ENCODE measurements at regions of chr17 and their contacts with region 1.

Region 1: DNA sequence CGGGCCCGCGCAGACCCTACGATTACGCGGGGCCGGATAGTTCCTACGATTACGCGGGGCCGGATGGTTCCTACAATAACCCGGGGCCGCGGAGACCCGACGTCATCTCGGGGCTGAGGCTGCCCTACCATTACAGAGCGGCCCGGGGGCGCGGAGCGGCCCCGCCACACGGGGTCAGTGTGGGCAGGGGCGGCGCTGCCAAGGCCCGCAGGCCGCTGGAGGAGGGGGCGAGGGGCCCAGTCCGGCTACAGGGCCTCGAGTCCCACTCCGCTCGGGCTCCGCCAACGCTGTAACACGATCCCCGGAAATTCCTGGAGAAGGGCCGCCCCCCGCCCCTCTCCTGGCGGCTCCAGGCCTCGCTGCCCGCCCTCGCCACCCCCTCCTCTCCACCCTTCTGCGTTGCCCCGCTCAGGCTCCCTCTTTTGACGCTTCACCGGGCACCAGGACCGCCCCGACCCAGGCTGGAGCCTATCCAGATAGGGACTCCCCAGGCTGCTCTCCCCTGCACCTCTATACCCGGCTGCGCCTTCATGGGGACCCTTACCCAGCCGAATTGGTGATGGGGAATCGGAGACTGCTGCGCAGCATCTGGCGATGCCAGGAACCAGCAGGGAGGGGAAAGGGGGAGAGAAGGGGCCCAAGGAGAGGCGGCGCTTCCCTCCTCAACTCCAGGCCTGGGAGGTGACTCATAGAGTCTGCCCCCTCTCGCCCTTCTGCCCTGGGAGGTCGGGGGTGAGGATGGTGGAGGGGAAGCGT is at the start of gene RAB34:
- DNase-seq: peak; percentile 74 to 93
- H3K4me3 ChIP-seq: peak within 1 kb of the TSS; percentile 87
- H3K27ac ChIP-seq: peak within 1 kb of the TSS; percentile 82
- H3K4me1 ChIP-seq: peaks cover 35% of the 10 kb centered on the region
- H3K27me3 ChIP-seq: no peaks in the 10 kb centered on the region
- CTCF ChIP-seq: no peak; the same call in 1 of the 2 replicates
- total RNA-seq, gene RAB34: 161 and 174 TPM in 2 replicates

Region 2: DNA sequence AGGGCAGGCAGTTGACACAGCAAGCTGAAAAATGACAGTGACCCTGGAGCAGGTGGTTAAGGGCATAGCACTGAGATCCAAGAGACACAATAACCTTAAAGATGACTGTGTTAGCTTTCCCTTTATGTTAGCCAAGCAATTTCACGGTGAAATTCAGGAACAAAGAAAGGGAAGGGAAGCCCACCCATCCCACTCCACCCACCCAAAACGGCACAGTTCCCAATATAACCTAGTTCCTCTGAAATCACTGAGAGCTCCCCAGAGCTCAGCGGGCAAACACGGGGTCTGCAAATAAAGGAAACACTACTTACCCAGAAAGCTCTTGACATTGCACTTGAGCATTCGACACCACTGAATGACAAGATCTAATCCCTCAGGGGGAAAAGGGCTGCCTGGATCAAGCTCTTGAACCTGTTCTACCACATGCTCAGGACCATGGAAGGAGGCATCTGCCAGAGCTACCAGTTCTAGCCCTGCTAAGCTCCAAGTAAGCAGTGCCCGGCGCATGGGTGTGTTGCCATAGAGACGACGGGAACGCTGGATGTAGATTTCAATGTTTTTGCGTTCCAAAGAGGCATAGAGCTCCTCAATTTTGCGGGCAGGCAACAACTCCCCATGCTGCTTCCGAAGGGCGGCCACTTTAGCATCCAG is 83.4 kb before region 1 on chr17:
- CTCF ChIA-PET with region 1: no interaction called
- POLR2A ChIA-PET with region 1: no interaction called
- intact Hi-C with region 1: no loop called
- DNase-seq: no peak
- H3K4me3 ChIP-seq: no peak overlapping the region
- H3K27ac ChIP-seq: no peak overlapping the region
- H3K4me1 ChIP-seq: no peaks in the 10 kb centered on the region
- H3K27me3 ChIP-seq: no peaks in the 10 kb centered on the region
- CTCF ChIP-seq: no peak

Region 3: GRCh38 chr17:28902819-28903545 is 185.2 kb after region 1 on chr17 and contains the start of gene DHRS13:
- CTCF ChIA-PET with region 1: no interaction called
- POLR2A ChIA-PET with region 1: interaction called, 3 read pairs
- intact Hi-C with region 1: loop called (anchors 5 kb)
- DNase-seq: peak; percentile 85 to 94
- H3K4me3 ChIP-seq: peak within 1 kb of the TSS; percentile 73
- H3K27ac ChIP-seq: no peak within 1 kb of the TSS
- H3K4me1 ChIP-seq: peaks cover 15% of the 10 kb centered on the region
- H3K27me3 ChIP-seq: no peaks in the 10 kb centered on the region
- CTCF ChIP-seq: peak; percentile 88
- total RNA-seq, gene DHRS13: 15.8 and 17.5 TPM in 2 replicates

Region 4: GRCh38 chr17:29076722-29077121 is 359.0 kb after region 1 on chr17:
- CTCF ChIA-PET with region 1: no interaction called
- POLR2A ChIA-PET with region 1: interaction called, 15 read pairs
- intact Hi-C with region 1: no loop called
- DNase-seq: no peak
- H3K4me3 ChIP-seq: no peak overlapping the region
- H3K27ac ChIP-seq: no peak overlapping the region
- H3K4me1 ChIP-seq: no peaks in the 10 kb centered on the region
- H3K27me3 ChIP-seq: no peaks in the 10 kb centered on the region
- CTCF ChIP-seq: no peak

Measured in PC-9 (cell line).